Body of pancreas (tissue), 4 donors: ENCODE measurements at regions of chr11 and their contacts with region 1.

Region 1: GRCh38 chr11:61679893-61680621 is at the start of gene DAGLA:
- DNase-seq: peak; percentile 74 to 86 (median 82)
- ATAC-seq: peak; percentile 87
- H3K4me3 ChIP-seq: peak within 1 kb of the TSS in 1 of 2 donors; percentile 26
- H3K27ac ChIP-seq: peak within 1 kb of the TSS; percentile 21 to 72 (median 43)
- H3K4me1 ChIP-seq: peaks cover 47% of the 10 kb centered on the region
- H3K27me3 ChIP-seq: no peaks in the 10 kb centered on the region
- CTCF ChIP-seq: peak; percentile 68 to 100 (median 99)
- POLR2A ChIP-seq: no peak
- total RNA-seq, gene DAGLA: 7.0 to 9.9 TPM

Region 2: GRCh38 chr11:61733120-61733978 is 53.3 kb after region 1 on chr11:
- intact Hi-C with region 1: loop called (anchors 5 kb)
- DNase-seq: peak; percentile 89 to 92 (median 90)
- ATAC-seq: peak; percentile 86
- H3K4me3 ChIP-seq: no peak overlapping the region
- H3K27ac ChIP-seq: peak overlapping the region in 1 of 4 donors; percentile 2
- H3K4me1 ChIP-seq: peaks cover 22% of the 10 kb centered on the region
- H3K27me3 ChIP-seq: no peaks in the 10 kb centered on the region
- CTCF ChIP-seq: peak; percentile 97 to 99 (median 98)
- POLR2A ChIP-seq: no peak

Region 3: DNA sequence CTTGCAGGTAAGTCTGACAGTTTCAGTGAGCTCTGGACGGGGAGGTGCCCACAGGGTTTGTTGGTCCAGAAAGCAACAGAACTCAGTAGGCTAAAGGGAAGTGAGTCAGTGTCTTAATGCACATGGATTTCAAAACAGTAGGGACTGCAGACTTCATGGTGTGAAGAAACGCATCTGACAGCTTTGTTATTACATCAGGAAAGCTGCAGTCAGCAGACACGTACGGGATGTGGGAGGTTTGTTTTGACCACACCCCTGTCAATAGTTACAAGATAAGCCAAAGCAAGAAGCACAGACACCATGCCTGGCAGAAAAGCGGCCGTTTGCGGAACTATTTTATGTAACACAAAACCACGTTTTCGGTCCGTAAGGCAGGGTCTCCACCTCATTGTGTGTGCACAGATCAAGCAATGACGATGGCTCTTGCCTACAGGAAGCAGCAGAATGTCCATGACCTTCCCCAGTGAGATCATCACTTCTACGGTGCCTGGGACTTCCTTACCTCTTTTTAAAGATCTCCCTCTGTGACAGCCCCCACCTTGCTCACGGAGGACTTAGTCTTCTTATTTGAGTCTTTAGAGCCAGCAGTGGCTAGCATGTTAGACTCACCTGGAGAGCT is 345.5 kb after region 1 on chr11:
- intact Hi-C with region 1: no loop called
- DNase-seq: peak; percentile 44 to 84 (median 59)
- ATAC-seq: peak; percentile 85
- H3K4me3 ChIP-seq: no peak overlapping the region
- H3K27ac ChIP-seq: peak overlapping the region; percentile 39 to 76 (median 61)
- H3K4me1 ChIP-seq: peaks cover 11% of the 10 kb centered on the region
- H3K27me3 ChIP-seq: no peaks in the 10 kb centered on the region
- CTCF ChIP-seq: no peak
- POLR2A ChIP-seq: peak in 2 of 3 donors; percentile 30 to 38